ENCODE measurements at regions of chrX and their contacts with region 1.

Region 1: GRCh38 chrX:133792198-133792953 is 193.0 kb downstream of the GPC3 start:
- DNase-seq: peak; percentile 21 to 89
- H3K4me3 ChIP-seq: no peak overlapping the region
- CTCF ChIP-seq: peak in 1 of 3 donors; percentile 22
- POLR2A ChIP-seq: no peak

Region 2: DNA sequence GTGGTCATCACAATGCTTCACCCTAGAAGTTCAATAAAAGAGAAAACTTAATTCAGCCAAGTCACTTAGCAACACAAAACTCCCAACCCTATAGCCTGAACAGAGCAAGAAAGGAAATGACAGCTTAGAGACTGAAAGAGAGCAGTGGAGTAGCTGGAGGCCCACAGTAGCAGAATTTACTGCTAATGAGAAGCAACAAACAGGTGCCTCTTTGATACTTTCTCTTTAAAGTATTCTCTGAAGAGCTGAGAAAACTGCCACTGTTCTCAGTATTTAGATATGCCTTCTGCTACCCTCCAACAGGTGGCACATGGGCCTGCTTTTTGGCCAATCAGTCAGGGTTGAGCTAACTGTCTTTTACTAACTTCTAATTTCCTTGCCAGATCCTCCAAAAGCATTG is 47.0 kb before region 1 on chrX:
- intact Hi-C with region 1: no loop called
- DNase-seq: no peak
- H3K4me3 ChIP-seq: no peak overlapping the region
- CTCF ChIP-seq: no peak
- POLR2A ChIP-seq: no peak

Region 3: GRCh38 chrX:134026565-134027311 is 234.4 kb after region 1 on chrX:
- intact Hi-C with region 1: loop called (anchors 5 kb)
- DNase-seq: peak in 1 of 2 donors; percentile 31
- H3K4me3 ChIP-seq: no peak overlapping the region
- CTCF ChIP-seq: no peak
- POLR2A ChIP-seq: no peak

Region 4: GRCh38 chrX:134396174-134396573 is 603.8 kb after region 1 on chrX:
- intact Hi-C with region 1: loop called (anchors 10 kb)
- DNase-seq: no peak
- H3K4me3 ChIP-seq: no peak overlapping the region
- CTCF ChIP-seq: no peak
- POLR2A ChIP-seq: no peak

Measured in lower leg skin (tissue), 4 donors.